ENCODE measurements at regions of chr19 and their contacts with region 1.

Region 1: DNA sequence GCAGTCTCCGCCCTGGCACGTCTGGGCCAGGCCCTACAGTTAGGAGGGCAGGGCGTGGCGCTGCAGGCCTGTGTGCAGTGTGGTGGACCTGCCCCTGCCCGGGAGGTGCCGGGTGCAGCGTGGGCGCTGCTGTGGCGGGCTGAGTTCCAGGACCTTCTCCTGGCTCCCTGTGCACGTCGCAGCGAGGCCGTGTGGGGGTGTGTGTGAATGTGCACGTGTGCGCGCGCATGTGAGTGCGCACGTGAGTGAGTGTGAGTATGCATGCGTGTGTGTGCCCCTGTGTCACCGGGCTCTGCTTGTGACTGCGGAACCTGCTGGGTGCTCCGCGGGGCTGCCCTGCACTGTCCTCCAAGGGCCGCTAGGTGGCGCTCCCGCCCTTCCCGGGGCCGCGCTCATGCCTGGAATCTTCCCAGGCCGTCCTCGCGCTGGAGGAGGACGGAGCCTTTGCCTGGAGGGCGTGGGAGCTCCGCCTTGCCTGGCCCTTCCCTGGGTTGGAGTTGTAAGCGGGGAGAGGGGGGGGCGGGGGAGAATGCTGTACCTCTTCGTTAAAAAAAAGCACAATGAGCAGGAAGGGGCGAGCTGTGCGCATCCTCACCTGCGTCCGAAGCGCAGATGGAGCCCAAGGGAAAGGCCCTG is 79.3 kb downstream of the KDM4B start:
- DNase-seq: peak; percentile 78 to 91 (median 85)
- H3K4me3 ChIP-seq: peak overlapping the region; percentile 12
- H3K27ac ChIP-seq: no peak overlapping the region
- H3K4me1 ChIP-seq: peaks cover 14% of the 10 kb centered on the region
- H3K27me3 ChIP-seq: no peaks in the 10 kb centered on the region
- CTCF ChIP-seq: peak; percentile 97 to 98 (median 97)
- EP300 ChIP-seq: no peak
- POLR2A ChIP-seq: no peak

Region 2: DNA sequence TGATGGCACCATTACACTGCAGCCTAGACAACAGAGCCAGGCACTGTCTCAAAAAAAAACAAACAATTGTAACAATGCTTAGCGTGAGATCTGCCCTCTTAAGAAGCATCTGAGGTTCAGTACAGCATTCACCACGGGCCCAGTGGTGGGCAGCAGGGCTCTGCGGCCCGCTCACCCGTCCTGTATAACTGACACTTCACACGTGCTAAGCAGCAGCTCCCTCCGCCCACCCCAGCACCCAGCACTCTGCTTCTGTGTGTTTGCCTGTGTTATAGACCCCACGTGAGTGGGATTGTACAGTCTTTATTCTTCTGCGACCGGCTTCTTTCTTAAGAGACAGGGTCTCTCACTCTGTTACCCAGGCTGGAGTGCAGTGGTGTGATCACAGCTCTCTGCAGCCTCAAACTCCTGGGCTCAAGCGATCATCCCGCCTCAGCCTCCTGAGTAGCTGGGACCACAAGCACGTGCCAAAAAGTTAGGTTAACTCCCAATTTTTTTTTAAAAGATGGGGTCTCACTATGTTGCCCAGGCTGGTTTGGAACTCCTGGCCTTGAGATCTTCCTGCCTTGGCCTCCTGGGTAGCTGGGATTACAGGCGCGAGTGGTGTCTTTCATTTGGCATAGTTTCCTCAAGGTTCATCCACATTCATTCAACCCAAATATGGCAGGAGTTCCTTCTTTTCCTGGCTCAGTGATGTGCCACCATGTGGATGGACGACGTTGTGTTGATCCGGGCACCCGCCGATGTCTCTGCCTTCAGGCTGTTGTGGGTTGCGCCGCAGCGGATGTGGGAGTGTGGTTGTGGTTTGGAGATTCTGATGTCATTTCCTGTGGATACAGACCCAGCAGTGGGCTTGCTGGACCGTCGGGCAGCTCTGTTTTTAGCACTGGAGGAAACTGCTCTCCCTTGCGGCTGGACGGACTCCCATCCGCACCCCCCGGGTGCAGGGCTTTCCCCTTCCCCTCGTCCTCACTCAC is 90.7 kb after region 1 on chr19:
- intact Hi-C with region 1: loop called in 3 of 4 experiments (anchors 5 to 10 kb)
- DNase-seq: peak in 1 of 5 donors; percentile 20
- H3K4me3 ChIP-seq: no peak overlapping the region
- H3K27ac ChIP-seq: no peak overlapping the region
- H3K4me1 ChIP-seq: no peaks in the 10 kb centered on the region
- H3K27me3 ChIP-seq: no peaks in the 10 kb centered on the region
- CTCF ChIP-seq: no peak
- EP300 ChIP-seq: no peak
- POLR2A ChIP-seq: no peak

Region 3: GRCh38 chr19:5205381-5205780 is 157.2 kb after region 1 on chr19:
- intact Hi-C with region 1: loop called in 1 of 4 experiments (anchors 10 kb)
- DNase-seq: no peak
- H3K4me3 ChIP-seq: no peak overlapping the region
- H3K27ac ChIP-seq: no peak overlapping the region
- H3K4me1 ChIP-seq: peaks cover 2% of the 10 kb centered on the region
- H3K27me3 ChIP-seq: no peaks in the 10 kb centered on the region
- CTCF ChIP-seq: no peak
- EP300 ChIP-seq: no peak
- POLR2A ChIP-seq: no peak

Region 4: DNA sequence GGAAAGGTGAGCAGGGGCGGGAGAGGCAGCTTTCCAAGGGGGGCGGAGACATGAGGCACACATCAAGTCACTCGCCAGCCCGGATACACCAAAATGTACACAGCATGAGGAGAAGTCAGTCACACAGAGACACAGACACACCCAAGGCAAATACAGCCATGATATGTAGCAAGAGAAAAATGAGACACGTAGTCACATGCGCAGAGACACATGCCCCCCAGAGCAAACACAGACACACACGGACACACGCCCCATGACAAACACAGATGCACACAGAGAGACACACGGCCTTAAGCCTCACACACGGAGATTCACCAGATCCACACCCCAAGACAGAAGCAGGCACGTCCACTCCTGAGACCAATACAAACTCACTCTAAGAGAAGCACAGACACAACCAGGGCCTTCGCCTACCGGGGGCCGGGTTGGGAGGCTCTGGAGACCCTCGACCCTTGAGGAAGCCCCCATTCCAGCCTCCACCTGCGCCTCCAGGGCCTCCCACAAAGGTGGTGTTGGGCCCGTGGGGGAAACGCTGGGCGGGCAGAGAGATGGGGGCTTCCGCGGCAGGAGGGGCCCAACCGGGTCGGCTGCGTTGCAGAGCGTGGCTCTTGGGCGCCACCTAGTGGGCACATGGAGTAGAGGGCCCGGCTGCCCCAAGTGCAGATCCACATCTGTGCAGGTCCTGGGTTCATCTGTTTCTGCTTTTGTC is 529.7 kb after region 1 on chr19:
- intact Hi-C with region 1: loop called (anchors 1 to 5 kb)
- DNase-seq: peak; percentile 51 to 82 (median 72)
- H3K4me3 ChIP-seq: no peak overlapping the region
- H3K27ac ChIP-seq: no peak overlapping the region
- H3K4me1 ChIP-seq: peaks cover 1% of the 10 kb centered on the region
- H3K27me3 ChIP-seq: no peaks in the 10 kb centered on the region
- CTCF ChIP-seq: peak; percentile 83 to 94 (median 84)
- EP300 ChIP-seq: no peak
- POLR2A ChIP-seq: no peak

Region 5: GRCh38 chr19:5690125-5690954 is 642.1 kb after region 1 on chr19 and contains the start of gene RPL36:
- intact Hi-C with region 1: loop called in 1 of 4 experiments (anchors 5 kb)
- DNase-seq: peak; percentile 97 to 100 (median 99)
- H3K4me3 ChIP-seq: peak within 1 kb of the TSS; percentile 78
- H3K27ac ChIP-seq: peak within 1 kb of the TSS; percentile 51 to 93
- H3K4me1 ChIP-seq: peaks cover 14% of the 10 kb centered on the region
- H3K27me3 ChIP-seq: no peaks in the 10 kb centered on the region
- CTCF ChIP-seq: peak; percentile 99
- EP300 ChIP-seq: no peak
- POLR2A ChIP-seq: peak; percentile 96
- total RNA-seq, gene RPL36: 1,413 to 2,353 (median 1,897) TPM

Measured in ovary (tissue), 10 donors.